ENCODE measurements at regions of chr7 and their contacts with region 1.

Region 1: GRCh38 chr7:29988424-29989256 is 961 bp downstream of the SCRN1 start:
- DNase-seq: peak in 1 of 2 donors; percentile 68
- H3K4me3 ChIP-seq: peak overlapping the region; percentile 94 to 97
- H3K27ac ChIP-seq: peak overlapping the region; percentile 97
- H3K4me1 ChIP-seq: peaks cover 0 to 9% of the 10 kb centered on the region in 2 donors
- H3K27me3 ChIP-seq: no peaks in the 10 kb centered on the region
- CTCF ChIP-seq: no peak

Region 2: DNA sequence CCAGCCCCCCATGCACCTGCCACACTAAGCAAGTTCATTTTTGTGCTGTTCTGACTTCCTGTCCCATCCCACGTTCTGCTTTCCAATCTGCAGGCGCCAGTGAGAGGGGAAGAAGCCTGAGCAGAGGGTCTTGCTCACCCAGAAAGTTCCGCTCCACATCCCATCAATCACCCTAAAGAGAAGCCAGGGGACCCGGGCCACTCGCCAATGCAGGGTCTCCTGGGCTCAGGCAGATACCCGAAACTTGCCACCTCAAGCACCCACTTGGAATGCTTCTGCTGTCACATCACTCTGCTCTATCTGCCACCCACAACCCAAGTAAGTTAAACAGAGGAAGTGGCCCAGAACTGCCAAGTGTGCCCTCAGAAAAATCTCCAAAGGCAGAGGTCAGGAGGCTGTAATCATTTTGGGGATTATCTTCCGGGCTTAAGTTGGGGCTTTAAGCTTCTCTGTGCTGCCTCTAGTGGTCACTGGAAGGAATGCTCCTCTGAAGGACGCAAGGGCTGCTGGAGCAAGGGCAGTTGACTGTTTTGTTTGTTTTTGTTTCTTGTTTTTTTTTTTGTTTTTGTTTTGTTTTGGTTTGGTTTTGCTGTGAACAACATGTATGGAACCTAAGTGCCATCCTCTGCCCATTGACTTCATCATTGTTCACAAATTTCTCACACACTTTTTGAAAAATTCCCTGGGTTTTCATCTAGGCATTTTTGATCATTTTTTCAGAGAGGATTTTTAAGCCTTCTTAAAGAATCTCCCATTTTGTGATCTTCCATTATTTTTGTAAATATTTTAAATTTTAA is 399.5 kb before region 1 on chr7:
- intact Hi-C with region 1: no loop called
- DNase-seq: no peak
- H3K4me3 ChIP-seq: no peak overlapping the region
- H3K27ac ChIP-seq: no peak overlapping the region
- H3K4me1 ChIP-seq: no peaks in the 10 kb centered on the region
- H3K27me3 ChIP-seq: no peaks in the 10 kb centered on the region
- CTCF ChIP-seq: peak in 2 of 3 experiments; percentile 62 to 63

Region 3: DNA sequence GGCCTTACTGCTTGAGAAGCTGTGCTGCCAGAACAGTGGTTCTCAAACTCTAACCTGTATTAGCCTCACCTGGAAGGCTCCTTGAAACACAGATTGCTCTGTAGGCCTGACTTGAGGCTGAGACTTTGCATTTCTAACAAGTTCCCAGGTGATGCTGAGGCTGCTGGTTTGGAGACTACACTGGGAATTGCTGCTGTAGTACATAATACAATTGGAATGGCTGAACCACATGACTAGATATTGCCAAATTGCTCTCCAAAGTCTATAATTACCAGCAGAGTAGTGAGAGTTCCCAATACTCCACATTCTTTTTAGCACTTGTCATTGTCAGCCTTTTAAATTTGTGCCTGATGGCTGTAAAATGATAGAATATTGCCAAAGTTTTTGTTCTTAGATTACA is 79.4 kb after region 1 on chr7:
- intact Hi-C with region 1: loop called (anchors 1 kb)
- DNase-seq: no peak
- H3K4me3 ChIP-seq: no peak overlapping the region
- H3K27ac ChIP-seq: peak overlapping the region; percentile 12 to 17
- H3K4me1 ChIP-seq: peaks cover 0 to 12% of the 10 kb centered on the region in 2 donors
- H3K27me3 ChIP-seq: no peaks in the 10 kb centered on the region
- CTCF ChIP-seq: no peak

Region 4: DNA sequence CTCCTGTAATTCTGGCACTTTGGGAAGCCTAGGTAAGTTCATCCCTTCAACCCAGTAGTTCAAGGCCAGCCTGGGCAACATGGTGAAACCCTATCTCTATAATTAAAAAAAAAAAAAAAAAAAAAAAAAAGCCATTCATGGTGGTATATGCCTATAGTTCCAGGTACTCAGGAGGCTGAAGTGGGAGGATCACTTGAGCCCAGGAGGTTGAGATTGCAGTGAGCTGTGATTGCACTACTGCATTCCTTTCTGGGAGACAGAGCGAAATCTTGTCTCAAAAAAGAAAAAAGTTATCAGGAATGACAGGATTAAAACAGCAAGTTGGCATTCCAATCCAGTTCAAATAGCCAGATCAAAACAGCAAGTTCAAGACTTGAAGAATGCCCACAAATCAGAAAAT is 116.6 kb after region 1 on chr7:
- intact Hi-C with region 1: no loop called
- DNase-seq: no peak
- H3K4me3 ChIP-seq: no peak overlapping the region
- H3K27ac ChIP-seq: no peak overlapping the region
- H3K4me1 ChIP-seq: no peaks in the 10 kb centered on the region
- H3K27me3 ChIP-seq: no peaks in the 10 kb centered on the region
- CTCF ChIP-seq: no peak

Measured in ascending aorta (tissue), 2 donors.